Endothelial cell of umbilical vein (primary cell): ENCODE measurements at regions of chr22 and their contacts with region 1.

Region 1: DNA sequence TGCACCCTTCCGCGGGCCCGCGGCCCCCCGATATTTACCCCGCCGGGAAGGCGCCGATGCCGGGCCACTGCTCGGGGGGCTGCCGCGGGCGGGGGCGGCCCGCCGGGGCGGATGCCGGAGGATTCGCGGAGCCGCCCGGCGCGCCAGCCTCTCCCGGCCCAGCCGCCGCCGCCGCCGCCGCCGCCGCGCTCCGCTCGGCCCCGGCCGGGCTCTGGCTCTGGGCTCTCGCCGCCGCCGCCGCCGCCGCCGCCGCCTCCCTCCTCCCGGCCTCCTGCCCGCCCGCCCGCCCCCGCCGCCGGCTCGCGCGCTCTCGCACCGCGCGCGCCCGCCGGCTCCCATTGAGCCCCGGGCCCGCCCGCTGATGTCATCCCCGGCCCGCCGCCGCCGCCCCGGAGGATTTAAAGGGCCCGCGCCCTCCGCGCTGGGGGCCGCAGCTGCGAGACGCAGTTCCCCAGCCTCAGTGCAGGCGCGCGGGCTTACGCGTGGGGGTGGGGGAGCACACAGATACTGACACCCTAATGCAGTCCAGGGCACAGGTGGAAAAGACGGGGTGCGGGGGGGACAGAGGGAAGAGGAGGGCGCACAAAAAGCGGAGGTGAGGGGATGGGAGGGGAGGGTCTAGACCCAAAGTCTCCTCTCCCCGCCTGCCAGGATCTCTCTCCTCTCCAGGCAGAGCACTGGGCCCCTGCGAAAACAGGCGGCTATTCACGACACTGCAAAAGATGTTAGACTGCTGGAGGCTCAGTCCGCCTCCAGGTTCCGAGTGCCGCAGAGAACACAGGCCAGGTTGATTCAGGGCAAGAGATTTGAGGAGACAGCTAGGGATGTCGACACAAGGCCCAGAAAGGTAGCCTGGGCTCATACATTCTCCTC is at the start of gene CSNK1E:
- DNase-seq: peak; percentile 47
- H3K4me3 ChIP-seq: peak within 1 kb of the TSS; percentile 84 to 98 (median 94)
- H3K27ac ChIP-seq: peak within 1 kb of the TSS; percentile 80
- H3K4me1 ChIP-seq: peaks cover 45% of the 10 kb centered on the region
- H3K27me3 ChIP-seq: no peaks in the 10 kb centered on the region
- CTCF ChIP-seq: no peak
- POLR2A ChIP-seq: no peak
- total RNA-seq, gene CSNK1E: 261 and 262 TPM in 2 replicates

Region 2: GRCh38 chr22:38214256-38215056 is 102.9 kb before region 1 on chr22:
- CTCF ChIA-PET with region 1: no interaction called
- POLR2A ChIA-PET with region 1: no interaction called
- dilution Hi-C with region 1: no loop called
- intact Hi-C with region 1: loop called (anchors 5 kb)
- DNase-seq: peak; percentile 50
- H3K4me3 ChIP-seq: no peak overlapping the region
- H3K27ac ChIP-seq: no peak overlapping the region
- H3K4me1 ChIP-seq: peaks cover 27% of the 10 kb centered on the region
- H3K27me3 ChIP-seq: no peaks in the 10 kb centered on the region
- CTCF ChIP-seq: no peak
- POLR2A ChIP-seq: no peak

Region 3: DNA sequence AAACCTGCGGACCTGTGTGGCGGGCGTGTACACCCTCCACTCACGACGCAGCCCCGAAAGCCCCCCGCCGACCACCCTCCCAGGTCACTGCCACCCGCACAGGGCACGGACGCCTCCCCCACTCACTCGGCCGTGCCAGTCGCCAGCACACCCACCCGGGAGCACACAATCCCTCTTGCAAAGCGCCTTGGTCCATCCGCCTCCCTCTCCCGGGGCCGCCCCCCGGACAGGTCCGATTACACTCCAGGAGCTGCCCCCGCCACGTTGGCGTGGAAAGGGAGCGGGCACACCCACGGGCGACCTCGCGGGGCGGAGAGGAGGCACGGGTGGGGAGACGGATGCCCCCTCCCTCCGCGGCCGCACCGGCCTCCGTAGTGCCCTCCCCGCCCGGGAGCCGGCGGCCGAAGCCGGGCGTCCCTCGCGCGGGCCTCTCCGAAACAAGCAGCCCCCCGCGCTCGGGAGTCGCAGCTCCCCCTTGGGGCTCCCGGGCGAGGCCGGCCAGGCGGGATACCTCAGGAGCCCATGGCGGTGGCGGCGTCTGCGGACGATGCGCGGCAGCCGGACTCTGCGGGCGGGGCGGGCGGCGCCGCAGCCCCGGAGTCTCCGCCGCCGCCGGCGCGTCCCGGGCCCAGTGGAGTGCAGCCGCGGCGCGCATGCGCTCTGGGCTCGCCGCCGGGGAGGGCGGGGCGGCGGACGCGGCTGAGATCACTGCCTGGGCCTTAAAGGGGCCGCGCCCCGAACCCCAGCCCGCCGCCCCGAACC is 44.8 kb before region 1 on chr22 and contains the start of gene TMEM184B:
- CTCF ChIA-PET with region 1: no interaction called
- POLR2A ChIA-PET with region 1: no interaction called
- dilution Hi-C with region 1: no loop called
- intact Hi-C with region 1: loop called (anchors 5 kb)
- DNase-seq: peak; percentile 75
- H3K4me3 ChIP-seq: peak within 1 kb of the TSS; percentile 86 to 99 (median 92)
- H3K27ac ChIP-seq: peak within 1 kb of the TSS; percentile 76
- H3K4me1 ChIP-seq: peaks cover 20% of the 10 kb centered on the region
- H3K27me3 ChIP-seq: peaks cover 0 to 3% of the 10 kb centered on the region in 2 experiments
- CTCF ChIP-seq: no peak
- POLR2A ChIP-seq: peak; percentile 84
- total RNA-seq, gene TMEM184B: 96.6 and 99.8 TPM in 2 replicates

Region 4: GRCh38 chr22:38305471-38306448 is 11.6 kb before region 1 on chr22:
- CTCF ChIA-PET with region 1: interaction called, 10 read pairs
- POLR2A ChIA-PET with region 1: no interaction called
- dilution Hi-C with region 1: no loop called
- intact Hi-C with region 1: no loop called
- DNase-seq: peak; percentile 67
- H3K4me3 ChIP-seq: no peak overlapping the region
- H3K27ac ChIP-seq: peak overlapping the region; percentile 33
- H3K4me1 ChIP-seq: peaks cover 14% of the 10 kb centered on the region
- H3K27me3 ChIP-seq: no peaks in the 10 kb centered on the region
- CTCF ChIP-seq: peak in 1 of 2 donors; percentile 3
- POLR2A ChIP-seq: no peak

Region 5: DNA sequence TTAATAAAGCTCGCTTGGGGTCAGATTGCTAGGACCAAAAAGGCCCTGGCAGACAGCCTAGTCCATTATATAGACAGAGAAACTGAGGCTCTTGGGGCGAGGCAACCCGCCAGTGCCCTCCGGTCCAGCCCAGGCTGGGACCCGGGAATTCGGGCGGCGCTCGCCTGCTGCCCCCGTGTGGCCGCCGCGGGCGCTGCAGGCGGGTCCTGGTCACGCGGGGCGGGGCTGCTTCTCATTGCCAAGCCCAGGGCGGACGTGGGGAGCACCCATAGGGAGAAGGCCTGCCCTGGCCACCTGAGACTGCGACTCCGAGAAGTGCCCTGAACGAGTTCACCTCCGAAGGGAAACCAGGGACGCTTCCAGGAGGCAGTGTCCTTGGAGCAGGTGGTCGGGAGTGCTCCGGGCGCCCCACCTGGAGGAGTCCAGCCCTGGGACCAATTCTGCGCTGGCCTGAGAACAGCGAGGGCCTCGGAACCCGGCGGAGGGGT is 35.8 kb after region 1 on chr22:
- CTCF ChIA-PET with region 1: interaction called, 4 read pairs
- POLR2A ChIA-PET with region 1: no interaction called
- dilution Hi-C with region 1: no loop called
- intact Hi-C with region 1: loop called (anchors 1 kb)
- DNase-seq: peak; percentile 48
- H3K4me3 ChIP-seq: no peak overlapping the region
- H3K27ac ChIP-seq: no peak overlapping the region
- H3K4me1 ChIP-seq: no peaks in the 10 kb centered on the region
- H3K27me3 ChIP-seq: no peaks in the 10 kb centered on the region
- CTCF ChIP-seq: peak; percentile 93 to 99
- POLR2A ChIP-seq: no peak

Region 6: DNA sequence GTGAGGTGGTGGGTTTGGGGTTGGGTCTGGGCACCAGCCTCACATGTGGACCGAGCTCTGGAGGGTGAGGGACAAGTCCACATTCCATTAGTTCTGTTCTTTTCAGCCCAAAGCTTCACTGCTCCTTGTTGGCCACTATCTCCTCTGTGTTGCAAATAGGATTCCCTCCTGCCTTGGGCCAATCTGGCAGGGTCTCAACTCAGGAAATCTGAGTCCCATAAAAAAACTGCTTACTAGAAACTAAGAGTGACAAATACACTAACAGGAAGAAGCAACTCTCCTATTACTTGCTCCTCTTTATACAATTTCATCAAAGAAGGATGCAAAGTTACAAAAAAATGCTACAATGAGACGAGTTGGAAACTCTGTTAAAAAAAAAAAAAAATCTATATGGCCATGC is 66.1 kb after region 1 on chr22:
- CTCF ChIA-PET with region 1: no interaction called
- POLR2A ChIA-PET with region 1: no interaction called
- dilution Hi-C with region 1: no loop called
- intact Hi-C with region 1: no loop called
- DNase-seq: no peak
- H3K4me3 ChIP-seq: no peak overlapping the region
- H3K27ac ChIP-seq: no peak overlapping the region
- H3K4me1 ChIP-seq: no peaks in the 10 kb centered on the region
- H3K27me3 ChIP-seq: no peaks in the 10 kb centered on the region
- CTCF ChIP-seq: no peak
- POLR2A ChIP-seq: no peak

Region 7: GRCh38 chr22:38398609-38399461 is 81.5 kb after region 1 on chr22:
- CTCF ChIA-PET with region 1: no interaction called
- POLR2A ChIA-PET with region 1: no interaction called
- dilution Hi-C with region 1: no loop called
- intact Hi-C with region 1: loop called (anchors 5 kb)
- DNase-seq: peak; percentile 42
- H3K4me3 ChIP-seq: peak overlapping the region; percentile 82 to 94 (median 86)
- H3K27ac ChIP-seq: peak overlapping the region; percentile 37
- H3K4me1 ChIP-seq: peaks cover 2% of the 10 kb centered on the region
- H3K27me3 ChIP-seq: peaks cover 7 to 10% of the 10 kb centered on the region in 2 experiments
- CTCF ChIP-seq: no peak
- POLR2A ChIP-seq: no peak

Region 8: DNA sequence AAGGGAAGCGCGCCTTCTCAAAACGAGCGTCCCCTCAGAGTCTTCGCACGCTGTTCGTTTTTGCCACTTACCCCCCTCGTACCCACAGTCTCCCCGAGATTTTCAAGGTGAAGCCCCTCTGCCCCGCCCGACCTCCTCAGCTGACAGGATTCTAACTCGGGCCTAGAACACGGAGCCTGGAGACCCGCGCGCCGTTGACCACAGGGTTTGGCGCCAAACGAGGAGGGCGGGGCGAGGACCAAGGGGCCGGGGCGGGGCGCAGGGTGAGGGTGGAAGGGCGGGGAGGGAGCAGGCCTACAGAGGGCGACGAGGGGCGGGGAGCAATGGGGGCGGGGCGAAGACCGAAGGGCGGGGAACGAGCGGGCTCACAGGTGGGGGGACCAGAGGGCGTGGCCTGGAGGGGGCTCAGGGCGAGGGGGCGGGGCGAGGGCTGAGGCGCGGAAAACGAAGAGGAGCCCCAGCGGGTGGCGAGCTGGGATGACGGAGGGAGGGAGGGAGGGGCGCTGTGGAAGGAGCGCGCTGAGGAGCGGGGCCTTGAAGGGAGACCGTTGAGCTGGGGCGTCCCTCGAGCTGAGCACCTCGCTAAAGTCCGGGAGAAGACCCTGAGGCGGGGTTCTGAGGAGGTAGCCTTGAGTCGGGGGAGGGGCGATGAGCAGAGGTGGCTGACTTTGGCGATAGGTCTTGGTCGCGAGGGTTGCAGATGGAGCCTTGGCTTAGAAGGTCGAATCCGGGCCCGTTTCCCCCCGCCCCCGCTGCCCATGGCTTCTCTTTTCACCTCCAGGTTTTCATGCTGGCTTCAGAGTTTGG is 252.8 kb after region 1 on chr22 and contains the start of gene DMC1:
- CTCF ChIA-PET with region 1: no interaction called
- POLR2A ChIA-PET with region 1: no interaction called
- dilution Hi-C with region 1: no loop called
- intact Hi-C with region 1: no loop called
- DNase-seq: peak; percentile 69
- H3K4me3 ChIP-seq: peak within 1 kb of the TSS; percentile 19 to 75 (median 60)
- H3K27ac ChIP-seq: no peak within 1 kb of the TSS
- H3K4me1 ChIP-seq: peaks cover 7% of the 10 kb centered on the region
- H3K27me3 ChIP-seq: peaks cover 0 to 2% of the 10 kb centered on the region in 2 experiments
- CTCF ChIP-seq: no peak
- POLR2A ChIP-seq: no peak
- total RNA-seq, gene DMC1: 0.91 and 1.1 TPM in 2 replicates